ENCODE measurements at regions of chr6 and their contacts with region 1.

Region 1: DNA sequence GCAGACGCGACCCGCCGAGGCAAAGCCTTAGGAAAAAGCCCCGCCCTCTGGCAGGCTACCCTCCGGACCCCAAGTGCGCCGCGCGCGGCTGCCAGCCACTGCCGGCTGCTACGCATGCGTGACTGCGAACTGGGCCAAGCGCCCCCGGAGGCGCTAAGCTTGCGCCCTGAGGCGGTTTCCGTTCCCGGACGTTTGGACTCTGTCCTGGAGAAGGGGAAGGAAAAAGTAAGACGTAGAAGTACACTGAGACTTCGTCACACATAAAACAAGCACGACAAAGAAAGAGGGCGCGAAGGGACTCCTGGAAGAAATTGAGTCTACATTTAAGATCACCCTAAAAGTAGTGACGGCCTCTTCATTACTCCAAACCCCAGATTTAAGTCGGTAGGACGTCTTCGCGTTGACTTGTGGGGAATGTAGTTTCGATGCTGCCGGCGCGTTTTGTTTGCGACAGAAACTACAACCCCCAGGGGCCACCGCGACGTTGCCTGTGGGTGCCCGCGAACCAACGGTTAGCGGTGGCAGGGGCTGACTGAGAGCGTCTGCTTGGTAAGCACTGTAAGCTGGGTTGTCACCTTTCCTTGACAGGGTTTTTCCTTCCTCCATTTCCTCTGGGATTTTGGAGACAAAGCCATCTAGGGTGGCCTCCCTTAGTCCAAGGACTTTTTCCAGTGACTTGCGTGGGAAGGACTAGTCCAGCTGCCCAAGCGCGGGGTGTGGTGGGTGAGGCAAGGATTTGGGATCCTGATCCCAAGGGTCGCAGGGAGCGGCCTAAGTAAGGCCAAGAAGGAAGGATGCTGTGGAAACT is at the start of gene CEP57L1:
- DNase-seq: peak; percentile 94 to 97 (median 95)
- H3K4me3 ChIP-seq: peak within 1 kb of the TSS; percentile 74 to 80
- H3K4me3 Mint-ChIP-seq: peak within 1 kb of the TSS; percentile 90 to 97 (median 95)
- H3K27ac ChIP-seq: peak within 1 kb of the TSS; percentile 97
- H3K27ac Mint-ChIP-seq: peak within 1 kb of the TSS; percentile 97 to 100 (median 99)
- H3K4me1 ChIP-seq: peaks cover 44% of the 10 kb centered on the region
- H3K4me1 Mint-ChIP-seq: peaks cover 36 to 60% (median 44%) of the 10 kb centered on the region in 4 donors
- H3K27me3 ChIP-seq: no peaks in the 10 kb centered on the region
- H3K27me3 Mint-ChIP-seq: no peaks in the 10 kb centered on the region
- total RNA-seq, gene CEP57L1: 5.7 to 9.2 TPM

Region 2: GRCh38 chr6:108074359-108075144 is 1020.7 kb before region 1 on chr6 and contains the start of gene OSTM1:
- CTCF ChIA-PET with region 1: no interaction called
- POLR2A ChIA-PET with region 1: no interaction called
- intact Hi-C with region 1: loop called (anchors 1 kb)
- DNase-seq: peak; percentile 88 to 93 (median 93)
- H3K4me3 ChIP-seq: peak within 1 kb of the TSS; percentile 66 to 100
- H3K4me3 Mint-ChIP-seq: peak within 1 kb of the TSS; percentile 87 to 95 (median 90)
- H3K27ac ChIP-seq: peak within 1 kb of the TSS; percentile 78
- H3K27ac Mint-ChIP-seq: peak within 1 kb of the TSS; percentile 90 to 96 (median 94)
- H3K4me1 ChIP-seq: peaks cover 24% of the 10 kb centered on the region
- H3K4me1 Mint-ChIP-seq: peaks cover 18 to 32% (median 20%) of the 10 kb centered on the region in 4 donors
- H3K27me3 ChIP-seq: no peaks in the 10 kb centered on the region
- H3K27me3 Mint-ChIP-seq: peaks cover 0 to 5% of the 10 kb centered on the region in 2 donors
- total RNA-seq, gene OSTM1: 54.4 to 55.6 TPM

Region 3: GRCh38 chr6:108748055-108748454 is 347.2 kb before region 1 on chr6:
- CTCF ChIA-PET with region 1: no interaction called
- POLR2A ChIA-PET with region 1: no interaction called
- intact Hi-C with region 1: no loop called
- DNase-seq: no peak
- H3K4me3 ChIP-seq: no peak overlapping the region
- H3K4me3 Mint-ChIP-seq: no peak overlapping the region
- H3K27ac ChIP-seq: no peak overlapping the region
- H3K27ac Mint-ChIP-seq: no peak overlapping the region
- H3K4me1 ChIP-seq: no peaks in the 10 kb centered on the region
- H3K4me1 Mint-ChIP-seq: no peaks in the 10 kb centered on the region
- H3K27me3 ChIP-seq: no peaks in the 10 kb centered on the region
- H3K27me3 Mint-ChIP-seq: peaks cover 7 to 8% of the 10 kb centered on the region in 2 donors

Region 4: GRCh38 chr6:108848116-108848868 is 246.9 kb before region 1 on chr6 and contains the start of gene ARMC2:
- CTCF ChIA-PET with region 1: no interaction called
- POLR2A ChIA-PET with region 1: interaction called, 16 read pairs
- intact Hi-C with region 1: loop called (anchors 1 kb)
- DNase-seq: peak; percentile 85 to 88 (median 86)
- H3K4me3 ChIP-seq: peak within 1 kb of the TSS; percentile 46 to 78
- H3K4me3 Mint-ChIP-seq: peak within 1 kb of the TSS; percentile 84 to 91 (median 86)
- H3K27ac ChIP-seq: peak within 1 kb of the TSS; percentile 58
- H3K27ac Mint-ChIP-seq: peak within 1 kb of the TSS; percentile 81 to 93 (median 91)
- H3K4me1 ChIP-seq: peaks cover 15% of the 10 kb centered on the region
- H3K4me1 Mint-ChIP-seq: peaks cover 17 to 33% (median 23%) of the 10 kb centered on the region in 4 donors
- H3K27me3 ChIP-seq: no peaks in the 10 kb centered on the region
- H3K27me3 Mint-ChIP-seq: no peaks in the 10 kb centered on the region
- total RNA-seq, gene ARMC2: 10.7 to 11.2 TPM

Region 5: DNA sequence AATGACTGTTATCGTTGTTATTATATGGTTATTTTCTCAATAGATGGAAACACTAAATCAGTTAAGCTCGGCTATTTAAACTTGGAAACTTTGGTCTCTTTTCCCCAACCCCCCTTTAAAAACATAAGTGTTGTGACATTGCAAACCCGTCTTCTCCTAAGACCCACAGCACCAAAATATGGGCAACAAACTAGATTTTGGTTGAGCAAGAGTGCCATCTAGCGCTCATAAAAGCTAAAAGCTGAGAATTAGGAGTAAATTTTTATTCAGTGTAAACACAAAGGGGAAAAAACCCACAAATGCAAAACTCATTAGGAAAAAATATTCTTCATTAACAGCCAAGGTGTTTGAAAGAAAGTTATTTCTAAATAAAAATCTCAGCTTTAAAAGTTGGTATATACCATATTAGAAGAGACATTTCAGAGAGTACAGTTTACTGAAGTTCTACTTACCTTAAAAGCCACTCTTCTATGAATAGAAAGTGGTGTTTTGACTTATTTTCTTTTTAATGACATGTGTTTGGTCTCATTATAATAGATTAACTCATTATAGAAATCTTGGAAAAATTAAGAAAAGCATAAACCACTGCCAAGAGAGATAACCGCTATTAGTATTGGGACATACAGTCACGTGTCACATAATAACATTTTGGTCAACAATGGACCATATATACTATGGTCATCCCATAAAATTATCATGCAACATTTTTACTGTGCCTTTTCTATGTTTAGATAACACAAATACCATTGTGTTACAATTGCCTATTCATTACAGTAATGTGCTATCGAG is 21.7 kb before region 1 on chr6:
- CTCF ChIA-PET with region 1: interaction called, 10 read pairs
- POLR2A ChIA-PET with region 1: interaction called, 22 read pairs
- intact Hi-C with region 1: no loop called
- DNase-seq: peak; percentile 67 to 74 (median 71)
- H3K4me3 ChIP-seq: no peak overlapping the region
- H3K4me3 Mint-ChIP-seq: peak overlapping the region in 6 of 8 donors; percentile 20 to 71 (median 51)
- H3K27ac ChIP-seq: no peak overlapping the region
- H3K27ac Mint-ChIP-seq: peak overlapping the region in 4 of 7 donors; percentile 1 to 72 (median 34)
- H3K4me1 ChIP-seq: peaks cover 34% of the 10 kb centered on the region
- H3K4me1 Mint-ChIP-seq: peaks cover 24 to 39% (median 34%) of the 10 kb centered on the region in 4 donors
- H3K27me3 ChIP-seq: no peaks in the 10 kb centered on the region
- H3K27me3 Mint-ChIP-seq: no peaks in the 10 kb centered on the region

Region 6: DNA sequence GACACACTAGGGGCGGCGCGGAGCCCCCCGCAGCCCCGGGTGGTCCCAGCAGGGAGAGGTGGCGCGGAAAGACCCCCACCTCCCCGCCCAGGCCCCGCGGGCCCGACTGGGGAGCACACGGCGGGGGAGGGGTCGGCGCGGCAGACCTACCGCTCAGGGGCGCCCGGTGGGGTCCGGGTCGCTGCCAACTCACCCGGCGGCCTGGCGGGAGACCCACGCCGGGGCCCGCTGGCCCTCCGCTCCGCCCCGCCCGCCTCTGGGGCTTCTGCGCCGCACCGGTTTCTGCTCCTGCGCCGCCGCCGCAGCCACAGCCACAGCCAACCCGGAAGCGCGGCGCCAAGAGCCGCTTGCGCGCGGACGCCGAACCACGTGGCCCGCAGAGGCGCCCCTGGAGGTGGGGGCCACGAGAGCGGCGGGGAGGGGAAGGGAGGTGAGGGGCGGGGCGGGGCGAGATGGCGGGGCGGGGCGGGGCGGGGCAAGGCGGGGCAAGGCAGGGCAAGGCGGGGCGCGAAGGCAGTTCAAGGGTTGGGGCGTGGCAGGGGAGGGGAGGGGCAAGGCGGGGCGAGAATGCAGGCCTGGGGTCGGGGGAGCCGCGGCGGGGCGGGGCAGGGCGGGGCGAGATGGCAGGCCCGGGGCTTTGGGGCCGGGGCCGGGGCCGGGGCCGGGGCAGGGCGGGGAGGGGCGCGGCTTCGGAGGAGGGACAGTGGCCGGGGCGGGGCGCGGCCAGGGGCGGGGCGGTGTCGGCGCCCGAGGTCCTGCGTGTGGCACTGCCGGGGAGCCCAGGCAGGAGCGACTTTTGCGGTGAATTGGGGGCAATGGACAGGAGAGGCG is 387.9 kb after region 1 on chr6 and contains the start of gene ZBTB24:
- CTCF ChIA-PET with region 1: no interaction called
- POLR2A ChIA-PET with region 1: interaction called, 4 read pairs
- intact Hi-C with region 1: loop called (anchors 1 kb)
- DNase-seq: peak; percentile 90 to 93 (median 91)
- H3K4me3 ChIP-seq: peak within 1 kb of the TSS; percentile 76 to 77
- H3K4me3 Mint-ChIP-seq: peak within 1 kb of the TSS; percentile 84 to 97 (median 96)
- H3K27ac ChIP-seq: peak within 1 kb of the TSS; percentile 69
- H3K27ac Mint-ChIP-seq: peak within 1 kb of the TSS; percentile 89 to 97 (median 95)
- H3K4me1 ChIP-seq: peaks cover 46% of the 10 kb centered on the region
- H3K4me1 Mint-ChIP-seq: peaks cover 41 to 54% (median 47%) of the 10 kb centered on the region in 4 donors
- H3K27me3 ChIP-seq: no peaks in the 10 kb centered on the region
- H3K27me3 Mint-ChIP-seq: no peaks in the 10 kb centered on the region
- total RNA-seq, gene ZBTB24: 27.2 to 28.4 TPM

Region 7: GRCh38 chr6:109526905-109527628 is 431.8 kb after region 1 on chr6:
- CTCF ChIA-PET with region 1: no interaction called
- POLR2A ChIA-PET with region 1: no interaction called
- intact Hi-C with region 1: no loop called
- DNase-seq: peak; percentile 48 to 64 (median 52)
- H3K4me3 ChIP-seq: no peak overlapping the region
- H3K4me3 Mint-ChIP-seq: no peak overlapping the region
- H3K27ac ChIP-seq: no peak overlapping the region
- H3K27ac Mint-ChIP-seq: peak overlapping the region in 2 of 7 donors; percentile 2 to 52
- H3K4me1 ChIP-seq: no peaks in the 10 kb centered on the region
- H3K4me1 Mint-ChIP-seq: peaks cover 0 to 3% (median 0%) of the 10 kb centered on the region in 4 donors
- H3K27me3 ChIP-seq: no peaks in the 10 kb centered on the region
- H3K27me3 Mint-ChIP-seq: peaks cover 0 to 3% of the 10 kb centered on the region in 2 donors

Region 8: GRCh38 chr6:110815217-110816109 is 1720.2 kb after region 1 on chr6 and contains the start of gene CDK19:
- CTCF ChIA-PET with region 1: no interaction called
- POLR2A ChIA-PET with region 1: interaction called, 4 read pairs
- intact Hi-C with region 1: loop called (anchors 2 kb)
- DNase-seq: peak; percentile 99
- H3K4me3 ChIP-seq: peak within 1 kb of the TSS; percentile 85 to 91
- H3K4me3 Mint-ChIP-seq: peak within 1 kb of the TSS; percentile 95 to 100 (median 98)
- H3K27ac ChIP-seq: peak within 1 kb of the TSS; percentile 75
- H3K27ac Mint-ChIP-seq: peak within 1 kb of the TSS; percentile 98 to 100 (median 99)
- H3K4me1 ChIP-seq: peaks cover 26% of the 10 kb centered on the region
- H3K4me1 Mint-ChIP-seq: peaks cover 14 to 38% (median 20%) of the 10 kb centered on the region in 4 donors
- H3K27me3 ChIP-seq: no peaks in the 10 kb centered on the region
- H3K27me3 Mint-ChIP-seq: no peaks in the 10 kb centered on the region
- total RNA-seq, gene CDK19: 23.8 to 24.3 TPM